PC-3 (cell line): ENCODE measurements at regions of chr3 and their contacts with region 1.

Region 1: DNA sequence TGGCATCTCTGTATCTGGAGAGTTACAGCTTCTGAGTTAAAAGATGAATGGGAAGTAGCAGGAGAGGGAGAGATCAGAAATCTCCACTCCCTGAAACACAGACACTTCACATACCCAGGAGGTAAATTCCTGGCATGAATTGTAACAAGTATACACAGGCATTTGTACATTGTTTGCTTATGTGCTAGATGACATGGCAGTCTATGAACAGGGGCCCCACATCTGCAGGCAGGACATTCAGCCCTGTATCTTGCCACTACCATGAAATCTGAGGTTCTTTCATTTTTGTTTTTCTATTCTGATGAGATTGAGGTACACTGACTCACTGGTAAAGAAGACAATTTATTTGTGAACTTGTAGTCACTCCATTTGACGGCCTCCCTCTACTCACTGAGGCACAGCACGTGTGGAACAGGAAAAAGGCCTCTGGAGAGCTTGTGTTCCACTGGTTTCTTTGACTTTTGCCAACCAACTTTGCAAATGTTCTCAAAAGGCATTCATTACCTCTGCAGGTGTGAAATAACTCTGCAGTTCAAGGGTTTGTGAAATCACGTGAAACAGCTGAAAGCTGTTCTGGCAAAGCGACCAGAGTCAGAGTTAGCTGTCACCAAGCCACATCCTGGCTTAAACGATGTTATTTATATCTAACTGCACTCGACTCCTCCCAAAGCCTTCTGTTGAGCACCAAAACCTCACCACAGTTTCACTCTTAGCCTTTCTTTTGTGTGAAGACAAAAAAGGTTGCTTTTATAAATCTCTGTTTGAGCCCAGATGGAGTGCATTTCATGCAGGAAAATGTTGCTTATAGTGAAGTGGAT is 401.3 kb upstream of the CFAP20DC start:
- DNase-seq: no peak
- ATAC-seq: no peak
- H3K4me3 ChIP-seq: no peak overlapping the region
- H3K27ac ChIP-seq: no peak overlapping the region
- H3K4me1 ChIP-seq: peaks cover 25% of the 10 kb centered on the region
- H3K27me3 ChIP-seq: no peaks in the 10 kb centered on the region
- CTCF ChIP-seq: no peak

Region 2: GRCh38 chr3:59480486-59480995 is 29.4 kb after region 1 on chr3:
- CTCF ChIA-PET with region 1: no interaction called
- POLR2A ChIA-PET with region 1: interaction called, 3 read pairs
- intact Hi-C with region 1: loop called (anchors 2 kb)
- DNase-seq: peak; percentile 74
- ATAC-seq: peak; percentile 76
- H3K4me3 ChIP-seq: no peak overlapping the region; the same call in 1 of the 2 replicates
- H3K27ac ChIP-seq: no peak overlapping the region
- H3K4me1 ChIP-seq: peaks cover 31% of the 10 kb centered on the region
- H3K27me3 ChIP-seq: no peaks in the 10 kb centered on the region
- CTCF ChIP-seq: no peak

Region 3: GRCh38 chr3:59632760-59633573 is 181.8 kb after region 1 on chr3:
- CTCF ChIA-PET with region 1: no interaction called
- POLR2A ChIA-PET with region 1: no interaction called
- intact Hi-C with region 1: no loop called
- DNase-seq: no peak
- ATAC-seq: no peak
- H3K4me3 ChIP-seq: no peak overlapping the region
- H3K27ac ChIP-seq: no peak overlapping the region
- H3K4me1 ChIP-seq: no peaks in the 10 kb centered on the region
- H3K27me3 ChIP-seq: no peaks in the 10 kb centered on the region
- CTCF ChIP-seq: no peak